ENCODE measurements at regions of chr1 and their contacts with region 1.

Region 1: DNA sequence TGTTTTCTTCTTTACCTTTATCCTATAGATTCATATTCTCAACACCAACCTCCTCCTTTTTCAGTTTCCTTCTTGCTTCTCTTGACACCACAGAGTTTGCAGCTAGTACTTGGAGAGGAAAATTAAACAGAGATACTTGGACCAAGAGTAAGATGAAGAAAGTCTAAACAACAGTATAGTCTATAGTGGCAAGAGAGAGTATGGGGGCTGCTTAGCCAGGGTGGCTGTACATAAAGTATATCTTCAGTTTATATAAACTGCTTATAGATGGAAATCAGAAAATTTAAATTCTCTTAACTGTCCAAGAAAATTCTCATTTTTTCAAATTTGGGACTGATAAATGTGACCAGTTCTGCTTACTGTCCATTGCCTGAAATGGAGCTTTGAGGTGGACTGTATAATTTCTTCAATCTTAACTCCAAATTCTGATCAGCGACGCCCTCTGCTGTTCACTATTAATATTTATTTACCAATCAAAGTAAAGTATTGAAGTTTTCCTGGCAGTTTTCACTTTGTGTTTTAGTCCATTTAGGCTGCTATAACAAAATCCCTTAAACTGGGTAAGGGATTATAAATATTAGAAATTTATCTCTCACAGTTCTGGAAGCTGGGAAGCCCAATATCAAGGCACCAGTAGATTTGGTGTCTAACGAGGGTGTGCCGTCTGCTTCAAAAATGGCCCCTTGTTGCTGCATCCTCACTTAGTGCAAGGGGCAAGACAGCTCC is 14.8 kb upstream of the METTL18 start:
- DNase-seq: no peak
- H3K4me3 ChIP-seq: no peak overlapping the region
- H3K27ac ChIP-seq: no peak overlapping the region
- H3K4me1 ChIP-seq: no peaks in the 10 kb centered on the region
- H3K27me3 ChIP-seq: no peaks in the 10 kb centered on the region
- CTCF ChIP-seq: peak; percentile 30 to 65 (median 40)

Region 2: GRCh38 chr1:169466259-169467230 is 343.0 kb before region 1 on chr1:
- intact Hi-C with region 1: loop called (anchors 10 kb)
- DNase-seq: no peak
- H3K4me3 ChIP-seq: no peak overlapping the region
- H3K27ac ChIP-seq: no peak overlapping the region
- H3K4me1 ChIP-seq: no peaks in the 10 kb centered on the region
- H3K27me3 ChIP-seq: no peaks in the 10 kb centered on the region
- CTCF ChIP-seq: peak; percentile 10 to 49 (median 29)

Region 3: GRCh38 chr1:169601093-169601881 is 208.2 kb before region 1 on chr1:
- intact Hi-C with region 1: loop called (anchors 2 kb)
- DNase-seq: no peak
- H3K4me3 ChIP-seq: no peak overlapping the region
- H3K27ac ChIP-seq: no peak overlapping the region
- H3K4me1 ChIP-seq: no peaks in the 10 kb centered on the region
- H3K27me3 ChIP-seq: no peaks in the 10 kb centered on the region
- CTCF ChIP-seq: peak; percentile 20 to 44 (median 28)

Measured in ascending aorta (tissue), 2 donors.